ENCODE measurements at regions of chr5 and their contacts with region 1.

Region 1: GRCh38 chr5:172697123-172698121 is 56.4 kb downstream of the NEURL1B start:
- ATAC-seq: peak; percentile 55 to 93 (median 64)
- H3K4me3 ChIP-seq: peak overlapping the region in 1 of 5 donors; percentile 25
- H3K27ac ChIP-seq: no peak overlapping the region
- H3K4me1 ChIP-seq: peaks cover 10 to 22% of the 10 kb centered on the region in 2 donors

Region 2: GRCh38 chr5:172106511-172107356 is 590.7 kb before region 1 on chr5:
- in situ Hi-C with region 1: loop called in 1 of 9 experiments (anchors 25 kb)
- ATAC-seq: peak in 6 of 8 experiments; percentile 16 to 47 (median 26)
- H3K4me3 ChIP-seq: peak overlapping the region in 2 of 5 donors; percentile 13 to 14
- H3K27ac ChIP-seq: no peak overlapping the region
- H3K4me1 ChIP-seq: peaks cover 25 to 36% of the 10 kb centered on the region in 2 donors

Region 3: GRCh38 chr5:172454358-172455086 is 242.9 kb before region 1 on chr5 and contains the start of gene SH3PXD2B:
- in situ Hi-C with region 1: loop called in 1 of 9 experiments (anchors 25 kb)
- ATAC-seq: peak; percentile 22 to 75 (median 72)
- H3K4me3 ChIP-seq: peak within 1 kb of the TSS; percentile 69 to 99 (median 76)
- H3K27ac ChIP-seq: peak within 1 kb of the TSS; percentile 71 to 91
- H3K4me1 ChIP-seq: peaks cover 33 to 38% of the 10 kb centered on the region in 2 donors
- total RNA-seq, gene SH3PXD2B: 18.0 to 35.7 (median 24.3) TPM

Region 4: GRCh38 chr5:172463031-172463430 is 234.4 kb before region 1 on chr5:
- in situ Hi-C with region 1: loop called in 2 of 9 experiments (anchors 10 to 25 kb)
- ATAC-seq: no peak
- H3K4me3 ChIP-seq: no peak overlapping the region
- H3K27ac ChIP-seq: no peak overlapping the region
- H3K4me1 ChIP-seq: peaks cover 5 to 6% of the 10 kb centered on the region in 2 donors

Region 5: DNA sequence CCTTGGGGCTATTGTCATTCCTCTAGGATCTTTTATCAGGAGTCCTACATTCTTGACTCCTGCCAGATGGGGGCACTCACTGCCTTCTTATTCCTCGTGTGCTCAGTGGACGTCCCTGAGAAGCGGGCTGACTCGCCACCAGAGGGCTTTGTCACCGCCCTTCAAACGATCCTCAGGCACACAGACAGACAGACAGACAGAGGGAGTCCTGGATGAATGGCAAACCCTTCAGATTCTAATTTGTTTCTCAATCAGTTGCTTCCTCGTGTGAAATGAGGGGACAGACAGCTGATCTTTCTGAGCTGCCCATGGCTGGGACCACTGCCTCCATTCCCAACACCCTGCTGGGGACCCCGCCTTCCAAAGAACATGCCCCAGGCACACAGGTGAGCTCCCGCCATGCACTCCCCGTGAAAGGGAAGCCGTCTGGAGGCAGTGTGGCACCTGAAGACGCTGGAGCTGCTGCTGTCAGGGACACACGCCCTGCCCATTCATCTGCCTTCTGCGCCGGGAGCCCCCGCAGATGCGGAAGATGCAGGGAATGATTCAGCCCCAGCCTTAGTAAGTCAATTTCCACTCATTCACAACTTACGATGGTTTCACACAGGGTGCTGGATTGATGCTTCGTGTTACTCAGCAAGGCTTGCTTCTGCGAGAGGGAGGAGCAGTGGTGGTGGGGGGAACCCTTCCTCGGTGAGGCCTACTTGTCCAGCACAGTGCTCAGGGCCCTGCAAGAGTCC is 218.2 kb before region 1 on chr5:
- in situ Hi-C with region 1: loop called in 8 of 9 experiments (anchors 5 to 25 kb)
- ATAC-seq: peak; percentile 79 to 99 (median 93)
- H3K4me3 ChIP-seq: no peak overlapping the region
- H3K27ac ChIP-seq: no peak overlapping the region
- H3K4me1 ChIP-seq: peaks cover 2 to 7% of the 10 kb centered on the region in 2 donors

Region 6: DNA sequence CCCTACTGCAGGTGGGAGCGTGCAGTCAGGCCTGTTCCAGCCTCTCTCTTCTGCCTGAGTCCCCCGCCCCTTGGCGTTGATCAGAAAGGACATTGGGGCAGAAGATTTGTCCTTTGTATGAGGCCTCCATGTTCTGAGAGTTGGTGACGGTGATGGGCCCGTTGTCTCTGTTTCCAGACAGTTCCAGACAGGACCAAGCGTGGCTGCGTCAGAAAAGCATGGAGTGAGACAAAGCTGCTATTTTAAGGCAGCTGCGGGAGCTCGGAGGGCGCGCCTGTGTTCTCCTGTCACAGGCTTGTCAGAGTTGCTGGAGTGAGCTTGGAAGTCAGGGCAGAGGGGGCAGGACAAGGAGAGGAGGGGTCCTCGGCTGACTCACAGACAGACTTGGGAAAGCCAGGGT is 211.0 kb before region 1 on chr5:
- in situ Hi-C with region 1: loop called in 2 of 9 experiments (anchors 10 to 25 kb)
- ATAC-seq: no peak
- H3K4me3 ChIP-seq: no peak overlapping the region
- H3K27ac ChIP-seq: no peak overlapping the region
- H3K4me1 ChIP-seq: peaks cover 0 to 7% of the 10 kb centered on the region in 2 donors

Region 7: GRCh38 chr5:172504701-172505402 is 192.6 kb before region 1 on chr5:
- in situ Hi-C with region 1: no loop called
- ATAC-seq: peak in 6 of 8 experiments; percentile 34 to 88 (median 74)
- H3K4me3 ChIP-seq: no peak overlapping the region
- H3K27ac ChIP-seq: no peak overlapping the region
- H3K4me1 ChIP-seq: peaks cover 6 to 9% of the 10 kb centered on the region in 2 donors

Region 8: GRCh38 chr5:173001229-173001841 is 303.9 kb after region 1 on chr5:
- in situ Hi-C with region 1: no loop called
- ATAC-seq: no peak
- H3K4me3 ChIP-seq: no peak overlapping the region
- H3K27ac ChIP-seq: no peak overlapping the region
- H3K4me1 ChIP-seq: peaks cover 4 to 12% of the 10 kb centered on the region in 2 donors